Activated naive CD4-positive, alpha-beta T cell treated with anti-CD3 and anti-CD28 coated beads for 36 hours (primary cell): ENCODE measurements at regions of chr7 and their contacts with region 1.

Region 1: DNA sequence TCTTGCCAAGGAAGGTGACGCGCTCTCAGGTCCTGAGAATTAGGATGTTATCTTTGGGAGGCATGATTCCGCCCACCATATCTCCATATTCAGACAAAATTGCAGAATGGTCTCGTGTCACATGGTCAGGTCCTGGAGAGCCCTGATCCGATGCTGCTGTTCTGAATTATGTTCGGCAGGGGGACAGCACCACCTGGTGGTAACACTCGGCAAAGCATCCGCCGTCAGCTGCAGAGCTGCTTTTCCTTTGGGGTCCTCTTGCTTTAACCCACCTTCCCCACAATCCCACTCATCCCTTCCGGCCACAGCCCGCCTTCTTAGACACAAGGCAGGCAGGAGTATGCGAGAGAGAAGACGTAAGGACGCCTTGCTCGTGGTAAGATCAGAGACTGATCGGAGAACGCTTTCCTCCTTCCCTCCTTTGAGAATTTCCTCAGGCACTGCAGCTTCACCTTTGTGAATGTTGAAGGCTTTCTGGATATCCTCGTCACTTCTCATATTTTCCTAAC is 327.8 kb upstream of the C7orf33 start:
- DNase-seq: peak; percentile 77
- H3K4me3 Mint-ChIP-seq: peak overlapping the region; percentile 23
- H3K27ac Mint-ChIP-seq: no peak overlapping the region
- H3K4me1 Mint-ChIP-seq: peaks cover 8% of the 10 kb centered on the region
- H3K27me3 Mint-ChIP-seq: peaks cover 9% of the 10 kb centered on the region

Region 2: GRCh38 chr7:147547249-147547897 is 715.4 kb before region 1 on chr7:
- CTCF ChIA-PET with region 1: no interaction called
- intact Hi-C with region 1: loop called (anchors 2 kb)
- DNase-seq: peak; percentile 18
- H3K4me3 Mint-ChIP-seq: no peak overlapping the region
- H3K27ac Mint-ChIP-seq: no peak overlapping the region
- H3K4me1 Mint-ChIP-seq: no peaks in the 10 kb centered on the region
- H3K27me3 Mint-ChIP-seq: no peaks in the 10 kb centered on the region

Region 3: DNA sequence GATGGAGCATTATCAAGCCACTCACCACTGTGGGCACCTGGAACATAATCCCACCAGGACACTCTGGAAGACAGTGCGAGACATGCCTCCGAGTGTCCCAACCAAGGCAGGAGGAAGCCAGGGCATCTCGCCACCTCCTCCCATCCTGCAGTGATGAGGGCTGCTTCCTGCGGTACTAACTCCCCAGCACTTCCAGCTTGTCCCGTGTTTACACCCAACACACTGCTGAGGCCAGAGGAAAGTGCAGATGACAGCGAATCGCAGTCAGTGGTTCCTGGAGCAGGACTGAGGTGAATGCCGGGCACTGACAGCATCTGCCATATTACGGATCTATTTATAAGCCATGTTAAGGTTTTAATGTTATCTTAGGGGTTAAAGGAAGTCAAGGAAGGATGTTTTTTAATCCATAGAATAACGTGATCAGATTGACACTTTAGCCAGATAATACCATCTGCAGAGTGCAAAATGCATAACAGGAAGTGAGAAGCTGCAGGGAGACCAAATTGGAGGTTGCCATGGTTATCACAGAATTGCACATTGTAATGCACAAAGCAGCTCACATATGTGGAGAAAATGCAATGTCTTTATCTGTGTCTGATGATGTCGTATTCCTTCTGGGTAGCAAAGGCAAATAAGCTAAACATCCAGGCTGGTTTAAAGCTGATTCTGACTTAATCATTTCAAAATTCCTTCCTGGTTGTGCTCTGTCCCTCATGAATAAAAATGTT is 13.7 kb after region 1 on chr7:
- CTCF ChIA-PET with region 1: interaction called, 13 read pairs
- intact Hi-C with region 1: no loop called
- DNase-seq: no peak
- H3K4me3 Mint-ChIP-seq: no peak overlapping the region
- H3K27ac Mint-ChIP-seq: no peak overlapping the region
- H3K4me1 Mint-ChIP-seq: peaks cover 12% of the 10 kb centered on the region
- H3K27me3 Mint-ChIP-seq: peaks cover 3% of the 10 kb centered on the region

Region 4: GRCh38 chr7:148527707-148528168 is 265.0 kb after region 1 on chr7:
- CTCF ChIA-PET with region 1: interaction called, 3 read pairs
- intact Hi-C with region 1: loop called (anchors 1 kb)
- DNase-seq: peak; percentile 98
- H3K4me3 Mint-ChIP-seq: no peak overlapping the region
- H3K27ac Mint-ChIP-seq: no peak overlapping the region
- H3K4me1 Mint-ChIP-seq: peaks cover 4% of the 10 kb centered on the region
- H3K27me3 Mint-ChIP-seq: peaks cover 33% of the 10 kb centered on the region

Region 5: DNA sequence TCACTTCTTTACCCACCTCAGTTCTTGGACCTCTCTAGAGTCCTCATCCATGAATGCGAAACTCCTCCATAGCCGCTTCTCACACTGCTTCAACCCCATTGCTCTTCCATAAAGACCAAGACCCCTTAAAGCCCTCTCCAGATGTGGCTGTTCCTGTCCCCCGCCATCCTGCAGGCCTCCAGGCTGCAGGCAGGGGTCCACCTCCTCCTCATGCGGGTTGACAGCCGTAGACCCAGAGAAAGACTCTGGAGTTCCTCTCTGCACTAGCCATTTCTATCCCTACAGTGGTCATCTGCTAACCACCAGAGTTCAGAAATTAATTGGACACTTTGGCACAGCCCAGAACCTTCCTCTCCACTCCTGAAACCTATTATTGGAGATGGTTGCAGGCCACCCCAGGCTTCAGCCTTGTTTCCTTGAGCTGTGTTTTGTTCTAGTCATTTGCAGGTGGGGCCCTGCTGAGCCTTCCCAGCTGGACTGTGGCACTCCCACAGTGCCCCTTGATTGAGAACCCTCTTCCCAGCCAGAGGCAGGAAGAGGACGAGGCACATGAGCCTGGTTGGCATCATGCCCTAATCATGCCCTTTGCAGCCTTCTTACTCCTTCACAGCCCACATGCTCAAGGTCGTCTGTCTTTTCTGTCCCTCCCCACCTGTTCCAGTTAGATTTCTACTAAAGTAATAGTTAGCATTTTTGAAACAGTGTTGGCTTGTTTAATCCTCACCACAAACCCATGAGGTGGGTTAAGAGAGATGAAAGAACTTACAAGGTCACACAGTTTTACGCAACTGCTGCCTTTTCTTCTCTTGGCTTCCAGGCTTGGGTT is 459.8 kb after region 1 on chr7:
- CTCF ChIA-PET with region 1: no interaction called
- intact Hi-C with region 1: no loop called
- DNase-seq: peak; percentile 18
- H3K4me3 Mint-ChIP-seq: no peak overlapping the region
- H3K27ac Mint-ChIP-seq: peak overlapping the region; percentile 42
- H3K4me1 Mint-ChIP-seq: peaks cover 88% of the 10 kb centered on the region
- H3K27me3 Mint-ChIP-seq: no peaks in the 10 kb centered on the region